Posterior vena cava (tissue), 2 donors: ENCODE measurements at regions of chr2 and their contacts with region 1.

Region 1: GRCh38 chr2:237298151-237299118 is 115.5 kb downstream of the COL6A3 start:
- DNase-seq: no peak

Region 2: GRCh38 chr2:237262838-237263771 is 35.3 kb before region 1 on chr2:
- intact Hi-C with region 1: loop called in 1 of 2 experiments (anchors 5 kb)
- DNase-seq: no peak